ENCODE measurements at regions of chr17 and their contacts with region 1.

Region 1: GRCh38 chr17:68291844-68292695 is 775 bp downstream of the ARSG start:
- DNase-seq: peak; percentile 86
- ATAC-seq: peak; percentile 74
- H3K4me3 Mint-ChIP-seq: peak overlapping the region; percentile 84
- H3K27ac Mint-ChIP-seq: peak overlapping the region; percentile 83
- H3K4me1 Mint-ChIP-seq: peaks cover 45% of the 10 kb centered on the region
- H3K27me3 Mint-ChIP-seq: no peaks in the 10 kb centered on the region
- CTCF ChIP-seq: no peak

Region 2: GRCh38 chr17:68101075-68101992 is 190.7 kb before region 1 on chr17:
- CTCF ChIA-PET with region 1: no interaction called
- POLR2A ChIA-PET with region 1: no interaction called
- intact Hi-C with region 1: loop called (anchors 5 kb)
- DNase-seq: peak; percentile 75
- ATAC-seq: peak; percentile 86
- H3K4me3 Mint-ChIP-seq: peak overlapping the region; percentile 93
- H3K27ac Mint-ChIP-seq: peak overlapping the region; percentile 85
- H3K4me1 Mint-ChIP-seq: peaks cover 31% of the 10 kb centered on the region
- H3K27me3 Mint-ChIP-seq: no peaks in the 10 kb centered on the region
- CTCF ChIP-seq: no peak

Region 3: DNA sequence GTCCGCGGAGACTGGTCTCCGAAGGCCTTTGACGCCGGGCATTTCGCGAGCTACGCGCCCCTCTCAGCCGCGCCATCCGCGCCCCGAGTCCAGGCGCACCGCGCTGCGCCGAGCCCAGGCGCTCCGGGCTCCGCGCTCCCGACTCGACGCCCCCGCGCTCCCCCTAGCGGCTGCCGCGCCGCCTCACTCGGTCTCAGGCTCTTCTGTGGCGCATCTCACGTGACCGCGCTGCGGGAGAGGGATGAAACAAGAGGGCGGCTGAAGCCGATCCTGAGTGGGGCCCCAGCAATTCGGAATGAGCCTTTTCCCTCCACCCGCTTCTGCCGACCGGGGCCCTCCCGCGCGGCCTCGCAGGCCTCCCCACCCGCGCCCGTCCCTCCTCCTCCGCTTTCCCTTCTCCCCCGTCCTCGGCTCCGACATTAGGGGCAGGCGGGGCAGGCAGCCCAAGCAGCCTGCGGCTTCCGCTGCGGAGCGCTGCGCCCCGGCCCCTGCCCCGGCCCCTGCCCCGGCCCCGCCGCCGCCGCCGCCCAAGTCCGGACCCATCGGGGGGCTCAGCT is 86.7 kb before region 1 on chr17:
- CTCF ChIA-PET with region 1: interaction called, 3 read pairs
- POLR2A ChIA-PET with region 1: interaction called, 31 read pairs
- intact Hi-C with region 1: loop called (anchors 1 kb)
- DNase-seq: peak; percentile 95
- ATAC-seq: peak; percentile 79
- H3K4me3 Mint-ChIP-seq: peak overlapping the region; percentile 89
- H3K27ac Mint-ChIP-seq: peak overlapping the region; percentile 94
- H3K4me1 Mint-ChIP-seq: peaks cover 41% of the 10 kb centered on the region
- H3K27me3 Mint-ChIP-seq: peaks cover 2% of the 10 kb centered on the region
- CTCF ChIP-seq: peak; percentile 28

Region 4: GRCh38 chr17:68255731-68256538 is 36.1 kb before region 1 on chr17:
- CTCF ChIA-PET with region 1: no interaction called
- POLR2A ChIA-PET with region 1: interaction called, 16 read pairs
- intact Hi-C with region 1: no loop called
- DNase-seq: no peak
- ATAC-seq: no peak
- H3K4me3 Mint-ChIP-seq: peak overlapping the region; percentile 16
- H3K27ac Mint-ChIP-seq: peak overlapping the region; percentile 89
- H3K4me1 Mint-ChIP-seq: peaks cover 83% of the 10 kb centered on the region
- H3K27me3 Mint-ChIP-seq: no peaks in the 10 kb centered on the region
- CTCF ChIP-seq: no peak

Region 5: GRCh38 chr17:68398691-68399637 is 106.9 kb after region 1 on chr17:
- CTCF ChIA-PET with region 1: interaction called, 13 read pairs
- POLR2A ChIA-PET with region 1: interaction called, 48 read pairs
- intact Hi-C with region 1: loop called (anchors 1 kb)
- DNase-seq: peak; percentile 23
- ATAC-seq: peak; percentile 76
- H3K4me3 Mint-ChIP-seq: no peak overlapping the region
- H3K27ac Mint-ChIP-seq: peak overlapping the region; percentile 62
- H3K4me1 Mint-ChIP-seq: peaks cover 7% of the 10 kb centered on the region
- H3K27me3 Mint-ChIP-seq: no peaks in the 10 kb centered on the region
- CTCF ChIP-seq: no peak

Region 6: DNA sequence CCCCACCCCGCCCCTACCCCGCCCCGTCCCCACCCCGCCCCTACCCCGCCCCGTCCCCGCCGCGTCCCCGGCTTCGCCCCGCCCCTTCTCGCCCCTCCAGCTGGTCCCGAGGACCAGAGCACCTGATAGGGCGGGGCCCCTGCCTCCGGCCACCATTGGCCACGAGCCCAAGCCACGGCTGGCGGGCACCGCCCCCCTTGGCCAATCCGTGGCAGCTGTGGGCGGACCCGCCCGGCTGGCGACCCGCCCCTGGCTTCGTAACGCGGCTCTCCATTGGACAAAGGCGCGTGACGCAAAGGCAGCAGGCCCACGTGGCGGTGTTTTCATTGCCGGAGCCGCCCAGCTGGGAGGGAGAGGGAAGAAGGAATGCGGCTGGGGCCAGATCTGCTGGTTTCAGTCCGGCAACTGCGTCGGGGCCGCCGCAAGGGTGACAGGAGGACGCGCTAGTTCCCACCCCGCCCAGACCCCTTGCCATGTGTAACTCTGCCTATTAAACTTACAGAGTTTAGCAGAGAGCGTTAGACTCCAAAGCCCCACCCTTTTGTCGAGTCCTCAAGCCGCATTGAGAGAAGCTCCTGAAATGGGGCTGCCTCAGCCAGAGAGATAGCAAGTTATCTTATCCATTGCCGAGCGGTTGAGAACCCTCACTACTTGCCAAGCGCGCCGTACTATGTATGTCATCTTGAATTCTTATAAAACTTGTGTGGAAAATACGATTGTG is 165.6 kb after region 1 on chr17:
- CTCF ChIA-PET with region 1: no interaction called
- POLR2A ChIA-PET with region 1: interaction called, 46 read pairs
- intact Hi-C with region 1: loop called (anchors 1 kb)
- DNase-seq: peak; percentile 97
- ATAC-seq: peak; percentile 98
- H3K4me3 Mint-ChIP-seq: peak overlapping the region; percentile 84
- H3K27ac Mint-ChIP-seq: peak overlapping the region; percentile 78
- H3K4me1 Mint-ChIP-seq: peaks cover 21% of the 10 kb centered on the region
- H3K27me3 Mint-ChIP-seq: no peaks in the 10 kb centered on the region
- CTCF ChIP-seq: no peak

Region 7: DNA sequence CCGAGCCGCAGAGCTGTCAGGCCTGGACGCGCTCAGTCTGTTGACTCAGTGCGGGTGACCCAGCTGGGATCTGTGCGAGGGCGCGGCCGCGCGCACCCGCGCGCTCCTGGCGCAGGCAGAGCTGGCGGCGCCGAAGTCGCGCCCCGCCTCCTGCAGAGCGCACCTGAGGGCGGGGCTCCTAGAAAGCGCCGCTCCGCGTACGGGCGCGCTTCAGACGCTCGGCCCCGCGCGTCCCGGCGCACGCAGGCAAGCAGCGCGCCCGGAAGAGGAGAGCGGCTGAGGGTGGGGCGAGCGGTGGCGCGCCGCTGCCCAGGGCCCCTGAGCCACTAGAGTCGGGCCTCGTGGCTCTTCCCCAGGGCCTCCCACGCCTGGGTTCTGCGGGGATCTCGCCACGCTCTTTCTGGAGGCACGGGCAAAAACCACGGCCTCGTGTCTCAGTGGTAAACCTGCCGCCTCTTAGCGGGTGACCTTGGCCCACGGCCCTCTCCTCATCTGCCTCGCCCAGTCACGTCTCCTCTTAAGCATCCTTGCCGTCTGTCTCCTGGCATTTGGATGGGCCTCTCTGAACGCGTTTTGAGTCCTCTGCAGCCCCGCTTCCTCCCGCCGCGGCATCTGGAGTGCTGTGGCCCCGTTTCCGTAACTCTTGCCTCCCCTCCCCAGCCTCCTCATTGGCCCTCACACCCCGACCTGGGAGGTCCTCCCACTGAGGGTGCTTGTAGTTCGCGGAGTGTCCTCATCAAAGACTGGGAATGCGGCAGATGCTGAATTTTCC is 1035.2 kb after region 1 on chr17 and contains the start of gene ABCA5:
- CTCF ChIA-PET with region 1: no interaction called
- POLR2A ChIA-PET with region 1: no interaction called
- intact Hi-C with region 1: loop called (anchors 5 kb)
- DNase-seq: peak; percentile 88
- ATAC-seq: peak; percentile 91
- H3K4me3 Mint-ChIP-seq: peak within 1 kb of the TSS; percentile 98
- H3K27ac Mint-ChIP-seq: peak within 1 kb of the TSS; percentile 97
- H3K4me1 Mint-ChIP-seq: peaks cover 27% of the 10 kb centered on the region
- H3K27me3 Mint-ChIP-seq: peaks cover 9% of the 10 kb centered on the region
- CTCF ChIP-seq: no peak
- total RNA-seq, gene ABCA5: 24.2 and 30.3 TPM in 2 replicates

Measured in activated B cell treated with CpG ODN at 0.5 μM for 24 hours (primary cell).